ENCODE measurements at regions of chr3 and their contacts with region 1.

Region 1: DNA sequence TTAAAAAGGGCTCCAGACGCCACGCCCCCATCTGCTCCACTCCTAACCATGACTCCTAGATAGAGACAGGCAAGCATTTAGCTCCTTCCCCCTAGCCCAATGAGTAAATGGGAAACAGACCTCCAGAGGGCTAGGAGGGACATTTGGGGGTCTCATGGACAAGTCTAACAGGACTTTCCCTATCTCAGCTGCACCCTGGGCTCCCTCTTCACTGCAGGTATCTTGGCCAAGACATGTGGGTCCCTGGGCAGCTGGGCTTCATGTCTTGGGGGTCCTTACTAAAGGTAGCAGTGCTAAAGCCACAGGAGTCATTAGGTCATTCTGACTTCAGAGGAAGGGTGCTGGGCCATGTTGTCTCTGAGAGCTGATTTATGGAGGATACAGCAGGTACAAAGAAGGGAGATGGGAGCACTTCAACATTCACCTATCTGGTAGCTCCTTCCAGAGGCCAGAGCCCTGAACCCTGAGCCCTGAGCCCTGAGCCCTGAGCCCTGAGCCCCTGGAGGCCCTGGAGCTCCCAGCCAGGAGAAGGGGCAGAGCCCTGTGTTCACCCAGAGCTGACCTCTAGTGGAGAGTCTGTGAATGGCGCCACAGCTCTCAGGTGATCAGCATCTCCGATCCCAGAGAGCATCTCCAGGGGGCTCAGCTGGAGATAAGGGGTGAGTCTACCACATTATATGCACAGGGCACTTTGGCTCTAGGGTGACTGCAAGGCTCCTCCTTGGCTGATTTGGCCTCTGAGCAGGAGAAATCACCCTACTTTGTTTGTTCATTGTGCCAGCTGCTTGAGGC is 40.1 kb upstream of the EPHB1 start:
- DNase-seq: peak; percentile 11
- H3K4me3 ChIP-seq: no peak overlapping the region
- H3K27ac ChIP-seq: no peak overlapping the region
- H3K4me1 ChIP-seq: no peaks in the 10 kb centered on the region
- H3K27me3 ChIP-seq: no peaks in the 10 kb centered on the region
- CTCF ChIP-seq: peak; percentile 27 to 57 (median 47)
- EP300 ChIP-seq: no peak
- POLR2A ChIP-seq: no peak

Region 2: GRCh38 chr3:133413161-133414020 is 1341.6 kb before region 1 on chr3:
- in situ Hi-C with region 1: no loop called
- intact Hi-C with region 1: no loop called
- DNase-seq: no peak
- H3K4me3 ChIP-seq: peak overlapping the region in 1 of 4 donors; percentile 8
- H3K27ac ChIP-seq: peak overlapping the region in 2 of 4 donors; percentile 21 to 24
- H3K4me1 ChIP-seq: peaks cover 0 to 15% (median 1%) of the 10 kb centered on the region in 4 donors
- H3K27me3 ChIP-seq: peaks cover 18% of the 10 kb centered on the region
- CTCF ChIP-seq: no peak
- EP300 ChIP-seq: no peak
- POLR2A ChIP-seq: no peak

Region 3: GRCh38 chr3:134517791-134518190 is 237.2 kb before region 1 on chr3:
- in situ Hi-C with region 1: no loop called
- intact Hi-C with region 1: no loop called
- DNase-seq: no peak
- H3K4me3 ChIP-seq: no peak overlapping the region
- H3K27ac ChIP-seq: no peak overlapping the region
- H3K4me1 ChIP-seq: no peaks in the 10 kb centered on the region
- H3K27me3 ChIP-seq: no peaks in the 10 kb centered on the region
- CTCF ChIP-seq: no peak
- EP300 ChIP-seq: no peak
- POLR2A ChIP-seq: no peak

Region 4: DNA sequence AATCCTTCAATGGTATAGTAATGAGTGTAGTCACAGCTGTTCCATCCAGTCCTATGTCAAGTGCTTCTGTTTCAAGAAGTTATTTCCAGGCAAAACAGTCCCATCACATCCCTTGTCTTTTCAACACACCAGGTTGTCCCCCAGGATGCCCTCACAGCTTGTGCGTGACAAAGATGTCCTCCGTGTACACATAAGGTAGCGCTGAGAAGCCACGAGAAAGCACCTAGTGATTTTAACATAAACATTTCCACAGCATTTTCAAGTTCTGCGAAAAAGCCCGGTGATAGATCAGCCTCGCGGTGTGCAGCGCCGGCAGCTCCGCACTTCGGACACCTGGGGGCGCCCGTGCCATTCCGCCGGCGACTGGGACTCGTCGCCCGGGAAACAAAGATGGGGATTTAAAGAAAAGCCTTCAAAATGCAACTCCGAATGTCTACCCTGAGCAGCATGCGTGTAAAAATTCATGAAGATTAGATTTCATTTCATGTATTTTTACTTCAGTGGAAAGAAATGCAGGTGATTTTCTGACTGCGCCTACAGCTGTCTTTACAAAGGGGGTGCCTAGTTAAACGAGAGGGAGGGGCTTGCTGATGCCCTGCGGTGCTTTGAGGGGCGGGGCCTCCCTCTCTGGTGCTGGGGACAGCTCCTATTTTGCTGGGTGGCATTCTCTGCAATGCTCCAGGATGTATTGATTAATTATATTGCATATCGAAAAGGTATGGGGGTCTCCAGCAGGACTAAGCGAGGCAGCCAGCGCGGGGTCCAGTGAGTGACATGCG is 154.1 kb before region 1 on chr3:
- in situ Hi-C with region 1: no loop called
- intact Hi-C with region 1: loop called (anchors 10 kb)
- DNase-seq: peak; percentile 44
- H3K4me3 ChIP-seq: no peak overlapping the region
- H3K27ac ChIP-seq: no peak overlapping the region
- H3K4me1 ChIP-seq: peaks cover 0 to 2% (median 0%) of the 10 kb centered on the region in 4 donors
- H3K27me3 ChIP-seq: no peaks in the 10 kb centered on the region
- CTCF ChIP-seq: peak; percentile 80 to 96 (median 92)
- EP300 ChIP-seq: no peak
- POLR2A ChIP-seq: no peak

Measured in transverse colon (tissue), 4 donors.